ENCODE measurements at regions of chr4 and their contacts with region 1.

Region 1: DNA sequence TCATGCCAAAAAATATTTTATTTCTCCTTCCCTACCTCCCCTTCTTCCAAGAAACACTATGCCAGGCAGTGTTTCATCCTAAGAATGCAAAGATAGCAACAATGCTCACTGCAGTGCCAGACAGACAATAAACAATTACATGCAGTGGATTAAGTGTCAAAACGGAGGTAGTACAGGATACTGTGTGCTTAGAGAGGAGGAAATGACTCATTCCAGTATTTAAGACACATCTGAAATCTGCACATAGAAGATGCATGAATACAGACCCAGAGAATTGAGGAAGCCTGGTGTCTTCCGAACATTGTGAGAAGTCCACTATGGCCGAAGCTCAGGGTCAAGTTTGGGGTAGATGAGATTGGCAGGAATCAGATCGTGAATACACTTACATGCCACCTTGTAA is 326.4 kb downstream of the PPP3CA start:
- DNase-seq: peak; percentile 31
- H3K4me3 Mint-ChIP-seq: peak overlapping the region; percentile 59
- H3K27ac Mint-ChIP-seq: peak overlapping the region; percentile 92
- H3K4me1 Mint-ChIP-seq: peaks cover 71% of the 10 kb centered on the region
- H3K27me3 Mint-ChIP-seq: no peaks in the 10 kb centered on the region

Region 2: DNA sequence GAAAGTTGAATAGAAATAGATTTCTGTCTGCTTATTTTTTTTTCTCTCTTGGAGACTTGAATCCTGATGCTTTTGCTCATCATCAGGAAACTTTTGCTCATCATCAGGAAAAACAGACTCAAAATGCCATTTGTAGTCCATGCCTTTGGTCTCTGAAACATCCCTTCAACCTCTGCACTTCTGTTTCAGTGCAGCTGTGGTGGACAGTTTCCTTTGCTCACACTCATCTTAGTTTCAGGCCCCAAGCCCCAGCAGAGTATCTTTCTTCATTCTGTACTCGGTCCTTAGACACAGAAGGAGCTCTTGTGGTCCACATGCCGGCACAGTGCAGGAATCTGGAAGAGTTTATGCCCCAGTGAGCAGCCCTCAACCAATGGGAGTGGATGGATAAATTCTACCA is 11.5 kb before region 1 on chr4:
- CTCF ChIA-PET with region 1: interaction called, 4 read pairs
- POLR2A ChIA-PET with region 1: interaction called, 17 read pairs
- DNase-seq: no peak
- H3K4me3 Mint-ChIP-seq: no peak overlapping the region
- H3K27ac Mint-ChIP-seq: peak overlapping the region; percentile 12
- H3K4me1 Mint-ChIP-seq: peaks cover 30% of the 10 kb centered on the region
- H3K27me3 Mint-ChIP-seq: no peaks in the 10 kb centered on the region

Region 3: GRCh38 chr4:101037938-101038413 is 17.0 kb after region 1 on chr4:
- CTCF ChIA-PET with region 1: interaction called, 4 read pairs
- POLR2A ChIA-PET with region 1: interaction called, 33 read pairs
- DNase-seq: peak; percentile 48
- H3K4me3 Mint-ChIP-seq: no peak overlapping the region
- H3K27ac Mint-ChIP-seq: peak overlapping the region; percentile 66
- H3K4me1 Mint-ChIP-seq: peaks cover 45% of the 10 kb centered on the region
- H3K27me3 Mint-ChIP-seq: no peaks in the 10 kb centered on the region